Activated CD4-positive, alpha-beta T cell treated with anti-CD3 and anti-CD28 coated beads, Interleukin-2, amount 10 ng/mL, durations not matched to agents 24 days and 14 days (primary cell): ENCODE measurements at regions of chr21 and their contacts with region 1.

Region 1: GRCh38 chr21:34996304-34997101 is 52.6 kb downstream of the RUNX1 start:
- DNase-seq: no peak
- H3K4me3 Mint-ChIP-seq: peak overlapping the region; percentile 36
- H3K27ac Mint-ChIP-seq: peak overlapping the region; percentile 57
- H3K4me1 Mint-ChIP-seq: peaks cover 44% of the 10 kb centered on the region
- H3K27me3 Mint-ChIP-seq: no peaks in the 10 kb centered on the region

Region 2: DNA sequence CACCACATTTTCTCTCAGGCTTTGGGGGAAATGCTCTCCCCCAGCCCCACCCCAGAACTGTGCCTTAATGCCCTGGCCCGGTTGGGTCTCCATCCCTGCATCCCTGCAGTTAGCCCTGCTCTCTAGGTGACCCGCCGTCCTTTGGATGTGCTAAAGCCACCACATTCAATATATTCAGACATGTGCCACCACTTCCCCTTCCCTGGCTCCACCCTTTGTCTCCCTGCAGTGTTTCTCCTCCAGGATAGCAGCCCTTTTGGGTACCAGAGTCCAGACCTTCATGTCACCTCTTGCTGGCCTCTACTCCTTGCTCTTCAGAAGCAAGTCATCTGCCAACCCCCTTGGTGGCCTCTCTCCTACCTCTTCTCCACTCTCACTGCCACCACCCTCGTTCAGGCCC is 10.8 kb after region 1 on chr21:
- intact Hi-C with region 1: loop called (anchors 1 kb)
- DNase-seq: no peak
- H3K4me3 Mint-ChIP-seq: no peak overlapping the region
- H3K27ac Mint-ChIP-seq: no peak overlapping the region
- H3K4me1 Mint-ChIP-seq: peaks cover 49% of the 10 kb centered on the region
- H3K27me3 Mint-ChIP-seq: no peaks in the 10 kb centered on the region

Region 3: GRCh38 chr21:35026617-35027562 is 30.4 kb after region 1 on chr21:
- intact Hi-C with region 1: loop called (anchors 2 kb)
- DNase-seq: peak; percentile 96
- H3K4me3 Mint-ChIP-seq: peak overlapping the region; percentile 81
- H3K27ac Mint-ChIP-seq: peak overlapping the region; percentile 99
- H3K4me1 Mint-ChIP-seq: peaks cover 73% of the 10 kb centered on the region
- H3K27me3 Mint-ChIP-seq: no peaks in the 10 kb centered on the region